Activated naive CD4-positive, alpha-beta T cell treated with anti-CD3 and anti-CD28 coated beads for 36 hours (primary cell): ENCODE measurements at regions of chr2 and their contacts with region 1.

Region 1: GRCh38 chr2:219229305-219230058 is at the starts of genes ANKZF1 and ATG9A:
- DNase-seq: peak; percentile 99
- H3K4me3 Mint-ChIP-seq: peak within 1 kb of the TSS; percentile 96
- H3K27ac Mint-ChIP-seq: peak within 1 kb of the TSS; percentile 97
- H3K4me1 Mint-ChIP-seq: peaks cover 48% of the 10 kb centered on the region
- H3K27me3 Mint-ChIP-seq: no peaks in the 10 kb centered on the region
- total RNA-seq, gene ANKZF1: 87.7 to 88.5 TPM
- total RNA-seq, gene ATG9A: 26.0 to 27.7 TPM

Region 2: GRCh38 chr2:218406209-218406948 is 823.1 kb before region 1 on chr2:
- CTCF ChIA-PET with region 1: no interaction called
- intact Hi-C with region 1: no loop called
- DNase-seq: peak; percentile 96
- H3K4me3 Mint-ChIP-seq: peak overlapping the region; percentile 82
- H3K27ac Mint-ChIP-seq: peak overlapping the region; percentile 75
- H3K4me1 Mint-ChIP-seq: peaks cover 34% of the 10 kb centered on the region
- H3K27me3 Mint-ChIP-seq: peaks cover 2% of the 10 kb centered on the region

Region 3: GRCh38 chr2:218710687-218711549 is 518.6 kb before region 1 on chr2 and contains the start of gene TTLL4:
- CTCF ChIA-PET with region 1: no interaction called
- intact Hi-C with region 1: loop called (anchors 10 kb)
- DNase-seq: peak; percentile 99
- H3K4me3 Mint-ChIP-seq: peak within 1 kb of the TSS; percentile 98
- H3K27ac Mint-ChIP-seq: peak within 1 kb of the TSS; percentile 80
- H3K4me1 Mint-ChIP-seq: peaks cover 15% of the 10 kb centered on the region
- H3K27me3 Mint-ChIP-seq: peaks cover 3% of the 10 kb centered on the region
- total RNA-seq, gene TTLL4: 23.7 to 24.7 TPM

Region 4: DNA sequence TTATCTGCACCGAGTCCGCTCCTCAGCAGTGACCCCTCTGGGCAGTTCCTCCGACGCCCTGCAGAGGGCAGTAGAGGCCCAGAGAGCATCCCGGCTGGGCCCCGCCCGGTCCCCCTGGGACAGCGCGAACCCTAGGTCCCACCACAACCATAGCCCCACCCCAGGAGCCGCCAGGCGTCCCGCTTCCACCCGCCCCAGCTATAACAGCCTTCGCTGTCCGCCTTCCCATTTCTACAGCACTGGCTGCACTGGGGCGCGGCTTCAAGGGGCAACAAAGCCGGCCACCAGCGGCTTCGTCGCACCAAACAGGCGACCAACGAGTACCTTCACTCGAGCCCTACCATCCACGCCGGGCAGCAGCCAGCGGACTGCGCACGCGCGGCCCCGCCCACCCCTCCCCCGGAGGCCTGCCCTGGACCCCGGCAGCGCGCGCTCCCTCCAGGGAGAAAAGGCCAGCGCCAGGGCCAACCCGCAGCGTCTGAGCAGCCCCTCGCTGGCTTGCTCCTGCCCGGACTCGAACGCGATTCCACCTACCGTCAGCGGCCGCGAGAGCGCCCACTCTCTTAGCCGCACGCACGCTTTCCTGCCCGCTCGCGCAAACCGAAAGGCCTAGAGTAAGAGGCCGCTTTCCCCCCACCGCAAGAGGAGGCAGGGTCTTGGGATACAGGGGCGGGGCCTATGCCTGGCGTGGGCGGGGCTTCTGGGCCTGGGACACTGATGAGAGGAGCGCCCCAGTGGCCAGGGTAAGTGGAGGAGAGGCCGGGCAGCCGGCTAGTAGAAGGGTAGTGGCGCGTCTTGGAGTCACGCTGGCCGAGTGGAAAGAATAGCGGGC is 69.1 kb before region 1 on chr2 and contains the start of gene NHEJ1:
- CTCF ChIA-PET with region 1: interaction called, 5 read pairs
- intact Hi-C with region 1: loop called (anchors 1 kb)
- DNase-seq: peak; percentile 96
- H3K4me3 Mint-ChIP-seq: peak within 1 kb of the TSS; percentile 80
- H3K27ac Mint-ChIP-seq: peak within 1 kb of the TSS; percentile 88
- H3K4me1 Mint-ChIP-seq: peaks cover 13% of the 10 kb centered on the region
- H3K27me3 Mint-ChIP-seq: no peaks in the 10 kb centered on the region
- total RNA-seq, gene NHEJ1: 24.4 to 26.6 TPM

Region 5: DNA sequence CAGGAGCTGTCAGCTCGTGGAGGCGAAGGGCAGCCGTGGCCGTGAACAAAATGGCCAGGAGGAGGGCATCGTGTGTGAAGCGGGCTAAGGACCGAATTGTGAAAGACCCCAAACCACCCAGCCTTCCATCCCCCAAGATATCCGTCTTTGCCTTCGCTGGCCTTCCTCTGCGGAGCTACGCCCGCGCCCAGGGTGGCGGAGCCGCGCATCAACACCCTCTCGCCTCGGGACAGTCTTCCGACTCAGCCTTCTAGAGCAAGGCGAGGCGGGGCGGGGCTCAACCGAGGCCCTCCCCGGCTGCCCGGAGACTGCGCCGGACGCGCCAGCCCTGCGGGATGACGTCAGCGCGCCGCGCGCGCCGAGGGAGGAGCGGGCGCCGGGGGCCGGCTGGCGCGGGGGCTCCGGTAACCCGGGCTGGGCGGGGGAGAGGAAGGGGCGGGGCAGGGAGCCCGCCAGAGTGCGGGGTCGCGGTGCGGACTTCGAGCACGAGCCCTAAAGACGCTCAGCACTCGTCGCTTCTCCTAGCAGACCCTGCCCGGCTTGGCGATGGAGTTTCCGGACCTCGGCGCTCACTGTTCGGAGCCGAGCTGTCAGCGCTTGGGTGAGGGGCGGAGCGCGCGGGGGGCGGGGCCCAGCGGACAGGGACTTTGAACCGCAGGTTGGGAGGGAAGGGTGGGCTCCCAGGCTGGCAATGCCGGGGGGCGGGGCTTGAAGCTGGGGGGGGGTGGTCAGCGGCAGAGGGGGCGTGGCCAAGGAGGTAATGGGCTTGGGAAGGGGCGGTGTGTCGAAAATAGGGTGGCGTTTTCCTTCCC is 22.8 kb before region 1 on chr2 and contains the start of gene ZFAND2B:
- CTCF ChIA-PET with region 1: interaction called, 6 read pairs
- intact Hi-C with region 1: loop called (anchors 1 kb)
- DNase-seq: peak; percentile 94
- H3K4me3 Mint-ChIP-seq: peak within 1 kb of the TSS; percentile 94
- H3K27ac Mint-ChIP-seq: peak within 1 kb of the TSS; percentile 96
- H3K4me1 Mint-ChIP-seq: peaks cover 32% of the 10 kb centered on the region
- H3K27me3 Mint-ChIP-seq: no peaks in the 10 kb centered on the region
- total RNA-seq, gene ZFAND2B: 32.6 to 33.6 TPM

Region 6: DNA sequence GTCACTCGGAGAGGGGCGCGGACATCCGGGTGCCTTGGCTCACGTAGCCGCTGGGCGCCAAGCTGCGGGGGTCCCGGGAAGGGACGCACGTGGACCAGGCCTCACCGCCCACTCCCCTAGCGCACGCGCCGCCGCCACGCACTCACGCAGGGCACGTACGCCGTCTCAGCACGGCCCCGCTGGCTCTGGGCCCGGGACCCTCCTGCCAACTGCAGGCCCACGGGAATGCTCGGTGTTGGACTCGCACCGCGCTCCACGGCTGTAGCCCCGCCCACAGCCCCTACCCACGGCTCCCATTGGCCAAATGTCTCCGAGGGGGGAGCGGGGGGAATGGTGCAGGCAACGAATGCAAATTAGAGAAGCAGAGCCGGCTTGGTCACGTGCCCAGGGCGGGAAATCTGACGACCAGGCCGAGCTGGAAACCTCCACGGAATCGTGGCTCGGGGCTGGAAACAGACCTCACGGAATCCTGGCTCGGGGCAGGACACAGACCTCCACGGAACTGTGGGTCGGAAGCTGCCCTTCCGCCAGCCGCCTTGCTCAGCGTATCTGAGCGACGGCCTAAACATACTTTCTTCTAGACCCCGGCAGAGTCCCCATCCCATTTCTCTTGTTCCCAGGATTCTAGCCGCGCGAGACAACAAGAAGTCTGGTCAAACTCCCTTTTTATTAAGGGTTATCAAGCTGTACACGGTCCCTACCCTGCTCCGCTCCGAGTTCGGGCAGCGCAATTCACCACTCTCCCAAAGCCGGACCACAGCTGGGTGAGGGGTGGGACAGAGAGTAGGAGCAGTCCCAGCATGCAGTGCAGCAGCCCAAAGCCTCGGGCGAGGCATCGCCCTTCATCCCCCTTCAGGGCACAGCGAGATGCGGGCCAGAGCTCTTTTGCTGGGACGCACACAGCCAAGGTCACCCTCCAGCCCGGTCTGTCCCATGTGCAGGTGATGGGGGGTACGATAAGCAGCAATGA is 10.5 kb before region 1 on chr2 and contains the start of gene ABCB6:
- CTCF ChIA-PET with region 1: interaction called, 3 read pairs
- intact Hi-C with region 1: loop called (anchors 1 kb)
- DNase-seq: peak; percentile 89
- H3K4me3 Mint-ChIP-seq: peak within 1 kb of the TSS; percentile 78
- H3K27ac Mint-ChIP-seq: peak within 1 kb of the TSS; percentile 56
- H3K4me1 Mint-ChIP-seq: peaks cover 25% of the 10 kb centered on the region
- H3K27me3 Mint-ChIP-seq: no peaks in the 10 kb centered on the region
- total RNA-seq, gene ABCB6: 7.0 to 7.5 TPM

Region 7: DNA sequence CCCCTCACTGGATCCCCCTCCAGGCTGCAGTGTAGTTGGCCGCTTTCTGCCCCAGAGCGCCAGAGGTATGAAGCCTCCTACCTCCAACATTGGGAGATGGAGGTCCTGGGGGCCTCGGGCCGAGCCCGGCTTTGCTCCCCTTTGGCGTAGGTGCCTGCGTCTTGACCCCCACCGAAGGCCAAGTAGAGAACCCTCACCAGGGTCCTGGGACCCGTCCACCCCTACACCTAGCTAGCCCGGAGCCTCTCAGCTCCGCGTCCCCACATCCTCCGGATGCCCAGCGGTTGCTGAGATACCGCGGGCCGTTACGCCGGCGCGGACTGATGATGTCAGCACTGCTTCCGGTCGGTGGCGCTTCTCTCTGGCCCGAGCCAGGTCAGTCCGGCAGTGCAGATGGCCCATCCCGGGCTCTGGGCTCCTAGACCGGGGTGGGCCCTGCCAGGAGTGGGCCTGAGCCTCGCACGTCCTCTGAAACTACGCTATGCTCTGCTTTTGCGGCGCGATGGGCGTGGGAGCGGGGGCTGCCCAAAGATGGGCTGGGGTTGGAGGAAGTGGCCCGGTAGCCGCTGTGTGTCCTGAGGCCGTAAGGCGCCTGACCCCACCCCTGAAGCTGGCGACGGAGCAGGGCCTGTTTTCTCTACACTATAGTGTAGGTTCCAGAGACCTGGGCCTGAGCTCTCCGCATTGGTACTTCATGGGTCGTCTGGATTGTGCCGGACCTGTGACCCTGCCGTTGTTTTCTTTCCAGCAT is 15.8 kb after region 1 on chr2 and contains the starts of genes GLB1L and STK16:
- CTCF ChIA-PET with region 1: interaction called, 8 read pairs
- intact Hi-C with region 1: loop called (anchors 1 kb)
- DNase-seq: peak; percentile 92
- H3K4me3 Mint-ChIP-seq: peak within 1 kb of the TSS; percentile 98
- H3K27ac Mint-ChIP-seq: peak within 1 kb of the TSS; percentile 99
- H3K4me1 Mint-ChIP-seq: peaks cover 57% of the 10 kb centered on the region
- H3K27me3 Mint-ChIP-seq: no peaks in the 10 kb centered on the region
- total RNA-seq, gene GLB1L: 2.1 TPM
- total RNA-seq, gene STK16: 33.7 to 35.5 TPM

Region 8: DNA sequence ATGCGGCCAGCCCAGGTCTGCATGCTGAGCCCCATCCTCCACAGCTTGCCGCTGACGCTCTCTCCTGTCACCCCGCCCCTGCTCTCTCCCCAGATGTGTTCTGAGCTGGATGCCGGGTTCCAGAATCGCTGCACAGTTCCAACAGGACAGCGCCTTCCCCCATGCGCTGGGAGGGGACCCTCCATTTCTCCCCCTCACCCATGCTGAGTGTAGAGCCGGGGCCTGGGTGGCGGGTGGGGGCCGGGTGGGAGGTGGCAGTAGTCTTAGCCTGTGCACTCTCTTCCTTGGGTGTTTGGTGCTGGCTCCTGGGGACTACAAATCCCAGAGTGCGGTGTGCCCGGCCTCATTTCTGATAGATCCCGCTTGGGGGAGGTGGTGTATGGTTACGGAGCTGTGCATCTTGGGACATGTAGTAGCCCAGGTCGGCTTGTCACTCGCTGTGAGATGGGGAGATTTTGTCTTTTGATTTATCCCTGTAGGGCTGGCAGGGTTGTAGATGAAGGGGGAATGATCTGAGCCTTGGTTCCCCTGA is 56.5 kb after region 1 on chr2:
- CTCF ChIA-PET with region 1: no interaction called
- intact Hi-C with region 1: no loop called
- DNase-seq: no peak
- H3K4me3 Mint-ChIP-seq: no peak overlapping the region
- H3K27ac Mint-ChIP-seq: no peak overlapping the region
- H3K4me1 Mint-ChIP-seq: peaks cover 10% of the 10 kb centered on the region
- H3K27me3 Mint-ChIP-seq: no peaks in the 10 kb centered on the region

Region 9: GRCh38 chr2:219306047-219306446 is 76.6 kb after region 1 on chr2:
- CTCF ChIA-PET with region 1: no interaction called
- intact Hi-C with region 1: no loop called
- DNase-seq: no peak
- H3K4me3 Mint-ChIP-seq: no peak overlapping the region
- H3K27ac Mint-ChIP-seq: no peak overlapping the region
- H3K4me1 Mint-ChIP-seq: peaks cover 8% of the 10 kb centered on the region
- H3K27me3 Mint-ChIP-seq: peaks cover 44% of the 10 kb centered on the region

Region 10: GRCh38 chr2:219638217-219638947 is 408.9 kb after region 1 on chr2:
- CTCF ChIA-PET with region 1: no interaction called
- intact Hi-C with region 1: no loop called
- DNase-seq: no peak
- H3K4me3 Mint-ChIP-seq: no peak overlapping the region
- H3K27ac Mint-ChIP-seq: no peak overlapping the region
- H3K4me1 Mint-ChIP-seq: peaks cover 5% of the 10 kb centered on the region
- H3K27me3 Mint-ChIP-seq: peaks cover 6% of the 10 kb centered on the region